ENCODE measurements at regions of chr4 and their contacts with region 1.

Region 1: DNA sequence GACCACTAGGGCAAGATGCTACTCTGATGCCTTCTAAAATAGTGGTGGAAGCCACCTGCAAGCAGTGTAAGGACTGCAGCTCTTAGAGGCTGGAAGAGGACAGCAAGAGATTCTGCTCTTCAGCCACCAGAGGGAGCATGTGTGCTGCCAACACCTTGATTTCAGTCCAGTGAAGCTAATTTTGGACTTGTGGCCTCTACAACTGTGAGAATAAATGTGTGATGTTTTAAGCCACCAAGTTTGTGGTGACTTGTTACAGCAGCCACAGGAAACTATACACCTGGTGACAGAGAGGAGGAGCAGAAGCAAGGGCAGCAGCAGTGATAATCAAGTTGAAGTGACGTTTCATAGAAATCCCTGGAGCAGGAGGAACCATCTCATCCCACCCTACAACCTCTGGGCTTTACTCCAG is 55.9 kb downstream of the FGFBP1 start:
- DNase-seq: peak; percentile 54 to 78 (median 75)
- H3K4me3 ChIP-seq: no peak overlapping the region
- H3K4me3 Mint-ChIP-seq: no peak overlapping the region
- H3K27ac ChIP-seq: no peak overlapping the region
- H3K27ac Mint-ChIP-seq: no peak overlapping the region
- H3K4me1 ChIP-seq: no peaks in the 10 kb centered on the region
- H3K4me1 Mint-ChIP-seq: peaks cover 2% of the 10 kb centered on the region
- H3K27me3 ChIP-seq: no peaks in the 10 kb centered on the region
- H3K27me3 Mint-ChIP-seq: peaks cover 0 to 3% (median 3%) of the 10 kb centered on the region in 3 donors
- CTCF ChIP-seq: peak; percentile 91

Region 2: DNA sequence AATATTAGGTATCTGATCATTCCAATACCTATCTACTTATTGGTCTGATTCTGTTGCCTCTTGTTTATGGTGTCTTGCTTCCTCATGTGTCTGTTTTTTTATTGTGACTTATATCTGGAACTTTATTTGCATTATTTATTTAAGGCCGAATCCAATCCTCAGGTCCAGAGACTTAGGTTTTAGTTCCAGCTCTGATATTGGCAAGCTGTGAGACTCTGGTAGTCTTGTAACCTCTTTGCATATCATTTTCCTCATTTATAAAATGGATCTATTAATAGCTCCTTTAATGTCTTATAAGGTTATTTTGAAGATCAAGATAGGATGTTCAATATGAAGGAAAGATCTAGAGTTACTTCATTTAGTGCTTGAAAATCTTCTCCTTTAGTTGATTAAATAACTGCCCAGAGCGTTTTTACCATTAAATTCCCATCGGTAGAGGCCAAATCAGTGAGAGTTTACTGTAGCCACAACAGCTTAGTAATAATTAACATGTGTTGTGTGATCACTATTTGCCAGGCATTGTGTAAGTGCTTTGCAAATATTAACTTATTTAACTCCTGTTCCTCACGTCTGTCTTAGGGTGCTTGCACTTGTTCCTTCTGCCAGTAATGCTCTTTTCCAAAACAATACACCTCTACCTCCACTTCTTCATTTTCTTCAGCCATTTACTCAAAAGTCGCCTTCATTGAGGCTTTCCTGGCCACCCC is 330.8 kb before region 1 on chr4:
- intact Hi-C with region 1: no loop called
- DNase-seq: no peak
- H3K4me3 ChIP-seq: no peak overlapping the region
- H3K4me3 Mint-ChIP-seq: no peak overlapping the region
- H3K27ac ChIP-seq: no peak overlapping the region
- H3K27ac Mint-ChIP-seq: peak overlapping the region in 1 of 7 donors; percentile 51
- H3K4me1 ChIP-seq: no peaks in the 10 kb centered on the region
- H3K4me1 Mint-ChIP-seq: peaks cover 5% of the 10 kb centered on the region
- H3K27me3 ChIP-seq: no peaks in the 10 kb centered on the region
- H3K27me3 Mint-ChIP-seq: peaks cover 0 to 1% (median 0%) of the 10 kb centered on the region in 3 donors
- CTCF ChIP-seq: no peak

Region 3: GRCh38 chr4:15805583-15806517 is 76.8 kb before region 1 on chr4:
- intact Hi-C with region 1: loop called (anchors 5 to 10 kb)
- DNase-seq: peak; percentile 47 to 71 (median 65)
- H3K4me3 ChIP-seq: no peak overlapping the region
- H3K4me3 Mint-ChIP-seq: no peak overlapping the region
- H3K27ac ChIP-seq: no peak overlapping the region
- H3K27ac Mint-ChIP-seq: peak overlapping the region in 2 of 7 donors; percentile 13 to 17
- H3K4me1 ChIP-seq: peaks cover 30% of the 10 kb centered on the region in 2 donors
- H3K4me1 Mint-ChIP-seq: peaks cover 46% of the 10 kb centered on the region
- H3K27me3 ChIP-seq: no peaks in the 10 kb centered on the region
- H3K27me3 Mint-ChIP-seq: peaks cover 0 to 3% (median 0%) of the 10 kb centered on the region in 3 donors
- CTCF ChIP-seq: peak; percentile 84

Region 4: GRCh38 chr4:15956179-15956850 is 73.6 kb after region 1 on chr4:
- intact Hi-C with region 1: loop called (anchors 1 to 5 kb)
- DNase-seq: peak; percentile 72 to 88 (median 81)
- H3K4me3 ChIP-seq: no peak overlapping the region
- H3K4me3 Mint-ChIP-seq: no peak overlapping the region
- H3K27ac ChIP-seq: no peak overlapping the region
- H3K27ac Mint-ChIP-seq: no peak overlapping the region
- H3K4me1 ChIP-seq: no peaks in the 10 kb centered on the region
- H3K4me1 Mint-ChIP-seq: peaks cover 4% of the 10 kb centered on the region
- H3K27me3 ChIP-seq: no peaks in the 10 kb centered on the region
- H3K27me3 Mint-ChIP-seq: peaks cover 0 to 4% (median 3%) of the 10 kb centered on the region in 3 donors
- CTCF ChIP-seq: peak; percentile 91

Region 5: DNA sequence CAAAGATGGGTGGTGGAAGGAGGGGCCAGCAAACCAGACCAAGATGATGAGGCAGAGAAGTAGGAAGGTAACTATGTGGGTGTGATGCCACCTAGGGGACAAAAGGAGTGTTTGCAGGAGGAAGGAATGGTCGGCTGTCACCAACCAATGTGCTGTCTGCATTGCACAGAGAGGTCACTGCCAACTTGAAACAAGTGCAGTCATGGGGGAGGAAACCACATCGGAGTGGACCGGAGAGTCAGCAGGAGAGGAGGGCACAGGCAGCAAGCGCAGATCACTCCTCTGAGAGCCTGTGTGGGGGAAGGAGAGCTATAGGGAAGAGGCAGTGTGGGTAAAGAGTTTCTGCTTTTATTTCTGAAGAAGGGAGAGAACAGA is 118.8 kb after region 1 on chr4:
- intact Hi-C with region 1: loop called in 1 of 2 experiments (anchors 2 kb)
- DNase-seq: peak; percentile 73 to 82 (median 75)
- H3K4me3 ChIP-seq: no peak overlapping the region
- H3K4me3 Mint-ChIP-seq: no peak overlapping the region
- H3K27ac ChIP-seq: no peak overlapping the region
- H3K27ac Mint-ChIP-seq: no peak overlapping the region
- H3K4me1 ChIP-seq: peaks cover 0 to 6% of the 10 kb centered on the region in 2 donors
- H3K4me1 Mint-ChIP-seq: no peaks in the 10 kb centered on the region
- H3K27me3 ChIP-seq: no peaks in the 10 kb centered on the region
- H3K27me3 Mint-ChIP-seq: peaks cover 0 to 2% (median 0%) of the 10 kb centered on the region in 3 donors
- CTCF ChIP-seq: peak; percentile 85